B cell (primary cell): ENCODE measurements at regions of chr18 and their contacts with region 1.

Region 1: DNA sequence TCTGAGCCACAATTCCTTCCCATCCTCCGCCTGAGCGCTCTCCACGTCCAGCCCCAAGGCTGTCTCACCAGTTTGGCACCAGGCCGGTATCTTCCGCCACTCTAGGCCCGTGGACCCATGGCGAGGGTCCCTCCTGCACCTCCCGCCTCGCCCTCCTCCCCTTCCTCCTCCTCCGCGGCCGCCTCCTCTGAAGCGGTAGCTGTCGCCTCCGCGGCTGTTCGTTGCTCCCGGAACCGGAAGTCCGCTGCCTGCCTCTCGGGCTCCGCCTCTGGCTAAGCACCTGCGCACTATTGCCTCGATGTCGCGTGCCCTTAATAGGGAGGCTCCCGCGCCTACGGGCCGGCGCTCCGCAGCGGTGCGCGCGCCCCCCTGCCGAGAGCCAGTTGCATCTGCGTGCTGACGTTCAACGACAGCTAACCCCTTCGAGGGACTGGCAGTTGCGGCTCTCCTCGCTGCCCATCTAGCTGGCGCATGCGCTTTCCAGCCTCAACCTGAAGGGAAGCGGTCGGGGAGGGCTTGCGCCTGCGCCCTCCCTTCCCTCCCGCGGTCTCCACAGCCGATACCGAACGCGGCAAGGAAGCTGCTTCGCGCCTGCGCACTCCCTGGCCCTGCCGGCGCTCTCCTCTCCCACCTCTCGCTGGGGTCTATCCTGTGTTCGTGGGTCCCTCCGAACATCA is at the start of gene MBD1:
- DNase-seq: peak; percentile 100
- ATAC-seq: peak; percentile 92
- H3K4me3 ChIP-seq: peak within 1 kb of the TSS; percentile 92 to 99 (median 99)
- H3K4me3 Mint-ChIP-seq: peak within 1 kb of the TSS; percentile 97
- H3K27ac ChIP-seq: peak within 1 kb of the TSS; percentile 81 to 87
- H3K27ac Mint-ChIP-seq: peak within 1 kb of the TSS; percentile 97
- H3K4me1 ChIP-seq: peaks cover 30 to 34% of the 10 kb centered on the region in 2 donors
- H3K4me1 Mint-ChIP-seq: peaks cover 39% of the 10 kb centered on the region
- H3K27me3 ChIP-seq: no peaks in the 10 kb centered on the region
- H3K27me3 Mint-ChIP-seq: no peaks in the 10 kb centered on the region
- CTCF ChIP-seq: no peak
- total RNA-seq, gene MBD1: 120 and 132 TPM in 2 replicates

Region 2: DNA sequence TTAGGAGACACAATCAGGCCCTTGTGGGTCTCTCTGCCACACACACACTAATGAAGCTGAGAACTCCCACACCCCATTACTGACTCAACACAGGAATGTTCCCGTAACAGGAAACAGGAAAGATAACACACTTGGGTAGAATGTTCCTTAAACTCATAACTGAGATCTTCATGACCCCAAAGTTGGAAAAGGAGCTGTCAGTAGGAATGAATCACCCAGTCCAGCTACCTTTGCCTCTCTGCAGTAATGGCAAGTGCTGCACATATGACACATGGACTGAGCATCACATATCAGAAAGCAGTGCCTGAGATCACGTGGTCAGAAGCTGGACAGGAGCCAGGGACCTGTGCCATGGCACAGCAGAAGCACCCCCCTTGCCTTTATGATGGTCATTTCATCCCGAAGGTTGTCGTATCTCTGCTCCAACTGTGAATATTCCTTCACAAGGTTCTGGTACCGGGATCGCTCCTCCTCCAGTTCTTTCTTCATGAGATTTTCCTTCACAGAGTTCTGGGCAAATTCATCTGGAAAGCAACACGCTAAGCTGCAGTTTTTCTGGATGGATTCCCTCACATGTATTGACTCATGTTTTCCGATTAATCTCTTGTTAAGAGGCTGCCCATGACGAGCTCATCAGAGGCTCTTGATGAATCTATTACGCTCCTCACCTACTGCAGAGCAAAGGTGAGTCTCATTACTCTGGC is 402.7 kb before region 1 on chr18:
- CTCF ChIA-PET with region 1: no interaction called
- POLR2A ChIA-PET with region 1: no interaction called
- intact Hi-C with region 1: no loop called
- DNase-seq: no peak
- ATAC-seq: no peak
- H3K4me3 ChIP-seq: no peak overlapping the region
- H3K4me3 Mint-ChIP-seq: no peak overlapping the region
- H3K27ac ChIP-seq: no peak overlapping the region
- H3K27ac Mint-ChIP-seq: no peak overlapping the region
- H3K4me1 ChIP-seq: no peaks in the 10 kb centered on the region
- H3K4me1 Mint-ChIP-seq: no peaks in the 10 kb centered on the region
- H3K27me3 ChIP-seq: no peaks in the 10 kb centered on the region
- H3K27me3 Mint-ChIP-seq: peaks cover 20% of the 10 kb centered on the region
- CTCF ChIP-seq: no peak

Region 3: GRCh38 chr18:50374753-50375391 is 93.4 kb after region 1 on chr18 and contains the start of gene SKA1:
- CTCF ChIA-PET with region 1: no interaction called
- POLR2A ChIA-PET with region 1: interaction called, 5 read pairs
- intact Hi-C with region 1: loop called (anchors 1 kb)
- DNase-seq: peak; percentile 96
- ATAC-seq: peak; percentile 100
- H3K4me3 ChIP-seq: peak within 1 kb of the TSS; percentile 60 to 78 (median 72)
- H3K4me3 Mint-ChIP-seq: peak within 1 kb of the TSS; percentile 85
- H3K27ac ChIP-seq: peak within 1 kb of the TSS; percentile 66 to 83
- H3K27ac Mint-ChIP-seq: peak within 1 kb of the TSS; percentile 89
- H3K4me1 ChIP-seq: peaks cover 5 to 16% of the 10 kb centered on the region in 2 donors
- H3K4me1 Mint-ChIP-seq: peaks cover 15% of the 10 kb centered on the region
- H3K27me3 ChIP-seq: peaks cover 0 to 7% (median 3%) of the 10 kb centered on the region in 4 experiments
- H3K27me3 Mint-ChIP-seq: peaks cover 13% of the 10 kb centered on the region
- CTCF ChIP-seq: no peak
- total RNA-seq, gene SKA1: 0.52 and 0.66 TPM in 2 replicates